Calu3 (cell line): ENCODE measurements at regions of chr7 and their contacts with region 1.

Region 1: DNA sequence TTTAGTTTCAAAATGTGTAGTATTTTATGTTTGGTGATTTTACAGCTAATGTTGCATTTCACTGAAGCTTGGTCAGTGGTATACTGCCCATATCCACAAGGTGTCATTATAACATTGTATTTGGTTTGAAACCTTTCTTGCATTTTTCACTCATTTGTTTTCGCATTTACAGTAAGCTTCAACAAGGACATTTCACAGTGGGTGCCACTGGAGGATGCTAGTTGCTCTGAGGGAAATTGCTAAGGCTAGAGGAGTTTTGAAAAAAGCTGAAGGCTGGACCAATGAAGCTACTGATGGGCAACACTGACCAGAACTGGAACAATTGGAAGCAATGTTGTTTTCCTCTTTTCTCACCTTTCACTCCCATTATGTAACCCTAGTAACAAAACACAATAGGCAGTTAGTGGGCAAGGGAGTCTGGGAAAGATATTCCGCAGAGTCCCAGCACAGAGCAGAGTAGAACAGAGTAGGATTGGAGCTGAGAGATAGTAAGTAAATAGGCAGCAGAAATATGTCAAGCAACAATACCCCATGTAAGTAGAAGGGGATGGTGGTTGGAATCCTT is 23.6 kb upstream of the SRI start:
- DNase-seq: peak; percentile 41
- H3K4me3 Mint-ChIP-seq: no peak overlapping the region
- H3K27ac Mint-ChIP-seq: no peak overlapping the region
- H3K4me1 Mint-ChIP-seq: peaks cover 9% of the 10 kb centered on the region
- H3K27me3 Mint-ChIP-seq: no peaks in the 10 kb centered on the region
- CTCF ChIP-seq: peak; percentile 48

Region 2: GRCh38 chr7:88040694-88041093 is 202.7 kb before region 1 on chr7:
- CTCF ChIA-PET with region 1: no interaction called
- intact Hi-C with region 1: no loop called
- DNase-seq: no peak
- H3K4me3 Mint-ChIP-seq: no peak overlapping the region
- H3K27ac Mint-ChIP-seq: no peak overlapping the region
- H3K4me1 Mint-ChIP-seq: no peaks in the 10 kb centered on the region
- H3K27me3 Mint-ChIP-seq: no peaks in the 10 kb centered on the region
- CTCF ChIP-seq: no peak

Region 3: DNA sequence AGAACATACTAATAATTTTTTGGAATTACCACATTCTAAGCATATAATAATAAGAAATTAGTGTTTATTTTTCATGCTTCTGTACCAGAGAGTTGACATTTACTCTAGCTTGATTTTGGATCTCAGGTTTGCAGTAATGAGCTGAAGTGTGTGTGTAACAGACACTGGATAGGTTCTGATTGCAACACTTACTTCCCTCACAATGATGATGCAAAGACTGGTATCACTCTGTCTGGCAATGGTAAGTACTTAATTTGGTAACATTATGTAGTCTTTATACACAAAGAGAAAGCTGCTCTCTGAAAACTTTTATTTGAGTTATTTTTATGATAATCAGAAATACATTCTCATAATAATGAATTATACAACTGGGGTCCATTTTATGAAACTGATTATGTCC is 77.7 kb before region 1 on chr7:
- CTCF ChIA-PET with region 1: no interaction called
- intact Hi-C with region 1: no loop called
- DNase-seq: no peak
- H3K4me3 Mint-ChIP-seq: no peak overlapping the region
- H3K27ac Mint-ChIP-seq: no peak overlapping the region
- H3K4me1 Mint-ChIP-seq: no peaks in the 10 kb centered on the region
- H3K27me3 Mint-ChIP-seq: no peaks in the 10 kb centered on the region
- CTCF ChIP-seq: no peak

Region 4: GRCh38 chr7:88204525-88205112 is 38.8 kb before region 1 on chr7:
- CTCF ChIA-PET with region 1: no interaction called
- intact Hi-C with region 1: no loop called
- DNase-seq: no peak
- H3K4me3 Mint-ChIP-seq: no peak overlapping the region
- H3K27ac Mint-ChIP-seq: no peak overlapping the region
- H3K4me1 Mint-ChIP-seq: no peaks in the 10 kb centered on the region
- H3K27me3 Mint-ChIP-seq: no peaks in the 10 kb centered on the region
- CTCF ChIP-seq: no peak

Region 5: DNA sequence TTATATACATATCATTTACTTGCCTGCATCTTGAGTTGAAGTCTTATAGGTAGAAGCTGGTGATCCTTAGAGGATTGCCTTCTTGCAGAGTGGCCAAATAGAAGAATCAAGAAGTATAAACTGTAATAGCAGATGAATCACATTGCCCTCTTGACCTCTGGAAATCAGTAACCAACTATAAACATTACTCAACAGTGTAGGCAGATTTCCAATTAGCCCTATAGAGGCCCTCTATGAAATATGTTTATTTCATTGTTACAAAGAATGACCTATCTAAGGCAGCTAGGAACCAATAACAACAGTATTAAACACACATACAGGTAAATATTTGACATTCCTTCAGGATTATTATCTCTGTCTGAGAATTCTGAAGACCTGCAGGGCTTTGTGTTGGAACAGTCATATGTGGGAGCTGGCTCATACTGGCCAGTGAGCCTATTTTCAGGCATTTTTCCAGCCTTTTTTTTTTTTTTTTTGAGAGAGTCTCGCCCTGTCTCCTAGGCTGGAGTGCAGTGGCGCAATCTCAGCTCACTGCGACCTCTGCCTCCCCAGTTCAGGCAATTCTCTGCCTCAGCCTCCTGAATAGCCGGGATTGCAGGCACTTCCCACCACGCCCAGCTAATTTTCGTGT is 16.4 kb before region 1 on chr7:
- CTCF ChIA-PET with region 1: interaction called, 12 read pairs
- intact Hi-C with region 1: no loop called
- DNase-seq: peak; percentile 55
- H3K4me3 Mint-ChIP-seq: no peak overlapping the region
- H3K27ac Mint-ChIP-seq: peak overlapping the region; percentile 39
- H3K4me1 Mint-ChIP-seq: peaks cover 15% of the 10 kb centered on the region
- H3K27me3 Mint-ChIP-seq: no peaks in the 10 kb centered on the region
- CTCF ChIP-seq: no peak

Region 6: GRCh38 chr7:88291398-88292173 is 48.2 kb after region 1 on chr7:
- CTCF ChIA-PET with region 1: interaction called, 5 read pairs
- intact Hi-C with region 1: loop called (anchors 2 kb)
- DNase-seq: peak; percentile 54
- H3K4me3 Mint-ChIP-seq: no peak overlapping the region
- H3K27ac Mint-ChIP-seq: peak overlapping the region; percentile 96
- H3K4me1 Mint-ChIP-seq: peaks cover 29% of the 10 kb centered on the region
- H3K27me3 Mint-ChIP-seq: no peaks in the 10 kb centered on the region
- CTCF ChIP-seq: no peak

Region 7: GRCh38 chr7:88357781-88358525 is 114.5 kb after region 1 on chr7:
- CTCF ChIA-PET with region 1: interaction called, 59 read pairs
- intact Hi-C with region 1: loop called (anchors 1 kb)
- DNase-seq: no peak
- H3K4me3 Mint-ChIP-seq: no peak overlapping the region
- H3K27ac Mint-ChIP-seq: no peak overlapping the region
- H3K4me1 Mint-ChIP-seq: no peaks in the 10 kb centered on the region
- H3K27me3 Mint-ChIP-seq: no peaks in the 10 kb centered on the region
- CTCF ChIP-seq: no peak

Region 8: DNA sequence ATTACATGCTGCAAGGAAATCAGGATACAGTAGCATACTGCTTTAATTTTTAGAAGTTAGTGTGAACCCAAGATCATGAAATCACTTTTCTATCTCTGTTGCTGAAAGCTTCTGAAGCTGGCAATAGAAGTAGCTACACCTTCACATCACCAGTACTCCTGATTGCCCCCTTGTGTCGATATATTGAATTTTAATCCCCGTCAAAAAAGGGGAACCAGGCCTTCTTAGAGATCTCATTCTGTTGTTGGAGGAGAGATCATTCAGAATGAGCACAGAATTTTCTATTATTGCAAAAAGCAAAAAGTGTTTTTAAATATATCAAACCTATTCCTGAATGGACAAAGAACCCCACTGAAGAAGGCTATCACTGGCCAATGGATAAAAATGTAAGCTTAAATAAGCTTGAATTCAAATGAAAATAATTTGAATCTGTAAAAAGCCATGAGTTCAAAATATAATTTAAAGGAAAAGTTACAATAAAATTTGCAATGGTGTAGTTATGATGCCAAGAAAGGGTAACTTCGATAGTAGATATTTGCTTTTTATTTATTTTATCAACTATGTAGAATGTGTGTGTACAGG is 591.8 kb after region 1 on chr7:
- CTCF ChIA-PET with region 1: interaction called, 17 read pairs
- intact Hi-C with region 1: loop called (anchors 10 kb)
- DNase-seq: peak; percentile 21
- H3K4me3 Mint-ChIP-seq: no peak overlapping the region
- H3K27ac Mint-ChIP-seq: no peak overlapping the region
- H3K4me1 Mint-ChIP-seq: no peaks in the 10 kb centered on the region
- H3K27me3 Mint-ChIP-seq: no peaks in the 10 kb centered on the region
- CTCF ChIP-seq: no peak